GM12878 (cell line): ENCODE measurements at regions of chr1 and their contacts with region 1.

Region 1: GRCh38 chr1:89632657-89633247 is at the start of gene LRRC8C:
- DNase-seq: no peak
- ATAC-seq: peak; percentile 85
- H3K4me3 ChIP-seq: peak within 1 kb of the TSS; percentile 88
- H3K27ac ChIP-seq: peak within 1 kb of the TSS; percentile 76
- H3K4me1 ChIP-seq: peaks cover 12% of the 10 kb centered on the region
- H3K27me3 ChIP-seq: no peaks in the 10 kb centered on the region; a peak in 1 of 4 replicates
- CTCF ChIP-seq: peak; percentile 23 to 68 (median 41); a peak in 4 of 6 replicates
- EP300 ChIP-seq: no peak; a peak in 1 of 4 replicates
- POLR2A ChIP-seq: 0 out of 2 replicates have a peak, but pooled peaks have one; percentile 19
- RAD21 ChIP-seq: peak; percentile 80
- polyA plus RNA-seq, gene LRRC8C: 2.3 to 3.1 TPM

Region 2: GRCh38 chr1:89598450-89599331 is 34.1 kb before region 1 on chr1:
- CTCF ChIA-PET with region 1: interaction called, 10 read pairs
- POLR2A ChIA-PET with region 1: no interaction called
- RAD21 ChIA-PET with region 1: interaction called, 3 read pairs
- SMC1A ChIA-PET with region 1: interaction called, 11 read pairs
- in situ Hi-C with region 1: no loop called
- intact Hi-C with region 1: no loop called
- DNase-seq: no peak
- ATAC-seq: peak; percentile 88
- H3K4me3 ChIP-seq: no peak overlapping the region
- H3K27ac ChIP-seq: no peak overlapping the region
- H3K4me1 ChIP-seq: peaks cover 9% of the 10 kb centered on the region
- H3K27me3 ChIP-seq: no peaks in the 10 kb centered on the region
- CTCF ChIP-seq: peak; percentile 53 to 62 (median 56)
- EP300 ChIP-seq: no peak
- POLR2A ChIP-seq: no peak
- RAD21 ChIP-seq: peak; percentile 67

Region 3: DNA sequence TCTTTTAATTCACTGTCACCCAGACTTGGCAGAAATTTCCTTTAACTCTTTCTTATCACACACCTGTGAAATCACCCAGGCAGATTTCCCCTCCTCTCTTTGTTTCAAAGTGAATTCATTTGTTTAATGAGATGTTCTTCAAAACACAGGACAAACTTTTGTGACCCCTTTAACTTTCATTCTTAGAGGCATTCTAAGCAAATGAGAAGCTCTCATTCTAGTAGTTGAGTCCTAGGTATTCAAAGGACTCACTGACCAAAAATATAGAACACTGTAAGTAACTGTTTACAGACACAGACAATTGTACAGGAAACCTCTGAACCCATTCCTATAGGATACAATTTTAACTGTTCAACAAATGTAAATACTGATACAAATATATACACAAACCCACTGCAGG is 17.0 kb after region 1 on chr1:
- CTCF ChIA-PET with region 1: interaction called, 33 read pairs
- POLR2A ChIA-PET with region 1: interaction called, 13 read pairs
- RAD21 ChIA-PET with region 1: interaction called, 21 read pairs
- SMC1A ChIA-PET with region 1: interaction called, 189 read pairs
- in situ Hi-C with region 1: no loop called
- intact Hi-C with region 1: no loop called
- DNase-seq: no peak
- ATAC-seq: peak; percentile 69
- H3K4me3 ChIP-seq: no peak overlapping the region
- H3K27ac ChIP-seq: no peak overlapping the region
- H3K4me1 ChIP-seq: peaks cover 12% of the 10 kb centered on the region
- H3K27me3 ChIP-seq: no peaks in the 10 kb centered on the region
- CTCF ChIP-seq: no peak
- EP300 ChIP-seq: no peak
- POLR2A ChIP-seq: no peak
- RAD21 ChIP-seq: no peak

Region 4: GRCh38 chr1:89670163-89670562 is 37.4 kb after region 1 on chr1:
- CTCF ChIA-PET with region 1: interaction called, 13 read pairs
- POLR2A ChIA-PET with region 1: interaction called, 4 read pairs
- RAD21 ChIA-PET with region 1: interaction called, 26 read pairs
- SMC1A ChIA-PET with region 1: interaction called, 274 read pairs
- in situ Hi-C with region 1: no loop called
- intact Hi-C with region 1: loop called (anchors 5 kb)
- DNase-seq: peak; percentile 94
- ATAC-seq: peak; percentile 93
- H3K4me3 ChIP-seq: no peak overlapping the region; the same call in 1 of the 2 replicates
- H3K27ac ChIP-seq: peak overlapping the region; percentile 72
- H3K4me1 ChIP-seq: peaks cover 37% of the 10 kb centered on the region
- H3K27me3 ChIP-seq: no peaks in the 10 kb centered on the region
- CTCF ChIP-seq: no peak
- EP300 ChIP-seq: peak; percentile 98
- POLR2A ChIP-seq: no peak
- RAD21 ChIP-seq: no peak

Region 5: DNA sequence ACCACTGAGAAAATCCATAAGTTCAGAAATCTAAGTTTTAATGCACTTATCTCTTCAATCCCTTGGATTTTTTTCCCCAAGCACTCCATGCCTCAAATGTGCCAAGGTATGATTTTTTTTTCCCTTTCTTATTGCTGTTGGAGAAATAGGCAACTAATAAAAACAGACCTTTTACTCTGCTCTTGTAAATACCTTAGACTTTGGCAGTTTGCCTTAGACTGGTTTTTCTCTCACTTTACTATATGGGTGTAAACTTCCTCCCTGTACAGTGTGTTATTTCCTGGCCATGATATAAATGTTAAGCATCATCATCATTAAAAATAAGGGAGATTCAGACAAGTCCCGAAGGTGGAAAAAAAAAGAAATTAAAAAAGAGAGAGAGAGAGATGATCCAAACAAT is 65.9 kb after region 1 on chr1:
- CTCF ChIA-PET with region 1: interaction called, 3 read pairs
- POLR2A ChIA-PET with region 1: interaction called, 4 read pairs
- RAD21 ChIA-PET with region 1: interaction called, 41 read pairs
- SMC1A ChIA-PET with region 1: interaction called, 25 read pairs
- in situ Hi-C with region 1: no loop called
- intact Hi-C with region 1: no loop called
- DNase-seq: no peak
- ATAC-seq: no peak
- H3K4me3 ChIP-seq: no peak overlapping the region
- H3K27ac ChIP-seq: no peak overlapping the region; the same call in 1 of the 2 replicates
- H3K4me1 ChIP-seq: peaks cover 22% of the 10 kb centered on the region
- H3K27me3 ChIP-seq: no peaks in the 10 kb centered on the region
- CTCF ChIP-seq: no peak
- EP300 ChIP-seq: no peak
- POLR2A ChIP-seq: no peak
- RAD21 ChIP-seq: no peak

Region 6: GRCh38 chr1:89719502-89720306 is 87.0 kb after region 1 on chr1:
- CTCF ChIA-PET with region 1: interaction called, 8 read pairs
- POLR2A ChIA-PET with region 1: interaction called, 3 read pairs
- RAD21 ChIA-PET with region 1: interaction called, 85 read pairs
- SMC1A ChIA-PET with region 1: interaction called, 107 read pairs
- in situ Hi-C with region 1: no loop called
- intact Hi-C with region 1: no loop called
- DNase-seq: peak; percentile 80
- ATAC-seq: peak; percentile 92
- H3K4me3 ChIP-seq: 0 out of 2 replicates have a peak overlapping the region, but pooled peaks have one; percentile 19
- H3K27ac ChIP-seq: 0 out of 2 replicates have a peak overlapping the region, but pooled peaks have one; percentile 4
- H3K4me1 ChIP-seq: peaks cover 28% of the 10 kb centered on the region
- H3K27me3 ChIP-seq: no peaks in the 10 kb centered on the region
- CTCF ChIP-seq: no peak
- EP300 ChIP-seq: peak; percentile 64 to 88; a peak in 2 of 4 replicates
- POLR2A ChIP-seq: no peak
- RAD21 ChIP-seq: peak; percentile 9; the same call in 1 of the 2 replicates

Region 7: GRCh38 chr1:89935235-89935634 is 302.5 kb after region 1 on chr1:
- CTCF ChIA-PET with region 1: no interaction called
- POLR2A ChIA-PET with region 1: no interaction called
- RAD21 ChIA-PET with region 1: no interaction called
- SMC1A ChIA-PET with region 1: no interaction called
- in situ Hi-C with region 1: no loop called
- intact Hi-C with region 1: no loop called
- DNase-seq: no peak
- ATAC-seq: no peak
- H3K4me3 ChIP-seq: no peak overlapping the region
- H3K27ac ChIP-seq: no peak overlapping the region
- H3K4me1 ChIP-seq: 0 out of 2 replicates have a peak, but pooled peaks cover 4% of the 10 kb centered on the region
- H3K27me3 ChIP-seq: no peaks in the 10 kb centered on the region
- CTCF ChIP-seq: no peak
- EP300 ChIP-seq: no peak
- POLR2A ChIP-seq: no peak
- RAD21 ChIP-seq: no peak

Region 8: GRCh38 chr1:89994805-89995597 is 362.2 kb after region 1 on chr1 and contains the start of gene ZNF326:
- CTCF ChIA-PET with region 1: no interaction called
- POLR2A ChIA-PET with region 1: no interaction called
- RAD21 ChIA-PET with region 1: no interaction called
- SMC1A ChIA-PET with region 1: interaction called, 3 read pairs
- in situ Hi-C with region 1: loop called (anchors 25 kb)
- intact Hi-C with region 1: loop called (anchors 10 kb)
- DNase-seq: peak; percentile 70
- ATAC-seq: peak; percentile 97
- H3K4me3 ChIP-seq: peak within 1 kb of the TSS; percentile 71
- H3K27ac ChIP-seq: peak within 1 kb of the TSS; percentile 89
- H3K4me1 ChIP-seq: no peaks in the 10 kb centered on the region
- H3K27me3 ChIP-seq: no peaks in the 10 kb centered on the region
- CTCF ChIP-seq: 0 out of 6 replicates have a peak, but pooled peaks of 1 of the 3 experiments have one; percentile 5
- EP300 ChIP-seq: no peak
- POLR2A ChIP-seq: peak; percentile 100
- RAD21 ChIP-seq: no peak
- polyA plus RNA-seq, gene ZNF326: 7.1 to 11.1 TPM